Right ventricle myocardium inferior (tissue), 1 donor: ENCODE measurements at regions of chr5 and their contacts with region 1.

Region 1: DNA sequence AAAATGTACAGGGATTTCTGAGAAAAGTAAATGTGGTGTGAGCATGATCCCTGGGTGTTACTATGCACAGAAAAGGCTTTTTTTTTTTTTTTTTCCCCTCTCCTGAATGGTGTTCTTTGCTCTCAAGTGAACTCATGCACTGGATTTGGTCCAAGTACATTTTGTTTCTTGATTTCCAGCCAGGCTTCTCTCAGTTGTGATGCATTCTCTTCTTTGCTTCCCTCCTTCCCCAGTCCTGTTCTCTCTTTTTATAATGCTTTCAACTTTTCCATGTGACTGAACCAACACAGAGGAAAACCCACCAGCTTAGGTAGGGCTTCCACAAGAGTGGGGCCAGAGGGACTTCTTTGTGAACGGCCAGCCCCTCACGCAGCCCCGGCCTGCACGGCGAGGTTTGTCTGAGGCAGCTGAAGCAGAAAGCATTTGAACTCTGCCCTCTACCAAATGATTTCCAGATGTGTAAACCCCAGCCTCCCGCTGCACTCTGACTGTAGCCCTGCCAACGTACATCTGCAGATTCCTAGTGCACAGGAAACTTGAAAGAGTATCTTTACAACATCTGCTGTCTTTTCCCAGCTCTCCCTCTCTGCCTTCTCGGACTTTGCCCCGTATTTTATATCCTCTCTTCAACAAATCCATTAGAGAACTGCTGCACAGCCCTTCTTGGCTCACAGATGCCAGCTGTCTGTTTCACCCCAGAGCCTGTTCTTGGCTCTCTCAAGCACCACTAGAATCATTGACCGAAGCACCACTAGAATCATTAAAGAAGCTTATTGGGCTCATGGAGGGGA is 71.8 kb upstream of the CD180 start:
- DNase-seq: peak; percentile 84
- ATAC-seq: peak; percentile 86

Region 2: GRCh38 chr5:67156976-67157583 is 111.3 kb before region 1 on chr5:
- intact Hi-C with region 1: no loop called
- DNase-seq: no peak
- ATAC-seq: no peak

Region 3: DNA sequence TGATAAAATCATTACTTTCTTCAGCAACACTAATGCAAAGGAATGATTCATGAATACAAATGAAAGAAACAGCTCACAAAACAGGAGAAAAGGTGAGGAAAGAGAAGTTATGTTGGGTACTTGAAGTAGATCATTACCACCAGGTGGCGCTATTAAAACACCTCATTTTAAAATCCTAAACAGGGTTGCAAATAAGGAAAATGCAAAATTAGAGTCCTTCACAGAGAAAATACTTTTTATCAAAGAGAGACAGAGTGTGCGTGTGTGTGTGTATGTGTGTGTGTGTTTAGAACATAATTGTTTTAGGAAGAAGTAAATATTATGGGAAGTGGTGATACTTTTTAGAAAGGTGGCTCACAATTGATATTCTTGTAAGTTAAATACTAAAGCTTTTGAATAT is 22.3 kb before region 1 on chr5:
- intact Hi-C with region 1: no loop called
- DNase-seq: no peak
- ATAC-seq: peak; percentile 56

Region 4: DNA sequence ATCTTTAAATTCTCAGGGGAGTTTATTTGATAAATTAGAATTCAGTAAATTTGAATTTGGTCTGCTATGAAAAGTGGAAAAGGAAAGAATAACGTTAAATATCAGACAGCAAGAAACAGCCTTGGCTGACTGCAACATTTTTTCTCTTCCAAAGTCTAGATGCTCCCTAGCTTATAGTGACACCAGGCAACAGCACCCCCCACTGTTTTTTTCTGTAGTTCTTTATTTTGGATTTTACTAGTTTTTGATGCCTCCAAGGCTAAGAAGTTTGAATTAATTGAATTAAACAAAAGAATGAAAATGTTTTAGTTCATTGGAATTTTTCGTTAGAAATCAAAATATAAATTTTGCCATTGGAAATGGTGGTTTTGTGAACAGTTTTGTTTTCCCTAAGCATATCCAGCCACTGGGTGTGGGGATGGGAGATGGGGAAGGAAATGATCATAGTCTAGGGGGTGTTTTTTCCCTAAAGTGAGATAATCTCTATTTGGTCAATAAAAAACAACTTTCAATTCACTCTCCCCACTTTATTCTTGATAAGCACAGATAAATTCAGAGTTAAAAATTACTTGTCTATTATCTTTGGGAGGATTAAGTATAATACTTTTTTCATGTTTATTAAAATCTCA is 127.5 kb after region 1 on chr5:
- intact Hi-C with region 1: loop called (anchors 10 kb)
- DNase-seq: no peak
- ATAC-seq: peak; percentile 50

Region 5: DNA sequence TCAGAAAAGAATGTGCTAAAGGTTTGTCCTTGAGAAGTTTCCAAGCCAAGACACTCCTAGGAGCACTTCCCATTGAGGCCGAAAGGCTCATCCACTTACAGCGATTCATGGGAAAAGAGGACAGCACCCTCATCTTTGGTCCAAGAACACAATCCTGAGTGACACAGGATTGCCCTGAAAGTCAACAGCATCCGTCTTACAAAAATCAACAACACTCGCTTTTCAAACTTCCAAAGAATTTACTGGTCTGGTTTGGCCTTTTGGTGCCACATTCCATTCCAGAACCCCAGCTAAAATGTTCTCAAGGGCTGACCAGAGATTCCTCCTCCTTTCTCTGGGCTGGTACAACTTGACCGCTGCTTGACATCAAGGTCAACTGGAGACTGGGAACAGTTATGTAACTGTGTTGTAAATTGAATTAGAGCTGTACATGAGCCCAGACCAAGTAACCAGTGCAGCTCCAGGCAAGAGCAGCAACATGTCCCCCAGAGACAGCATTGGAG is 531.4 kb after region 1 on chr5:
- intact Hi-C with region 1: loop called (anchors 10 kb)
- DNase-seq: peak; percentile 72
- ATAC-seq: peak; percentile 96